IMR-90 (cell line): ENCODE measurements at regions of chr9 and their contacts with region 1.

Region 1: GRCh38 chr9:91101611-91102168 is 260.0 kb downstream of the AUH start:
- DNase-seq: no peak
- ATAC-seq: no peak
- H3K4me3 ChIP-seq: no peak overlapping the region
- H3K27ac ChIP-seq: peak overlapping the region; percentile 65
- H3K4me1 ChIP-seq: peaks cover 26% of the 10 kb centered on the region
- H3K27me3 ChIP-seq: no peaks in the 10 kb centered on the region
- CTCF ChIP-seq: no peak
- POLR2A ChIP-seq: no peak
- RAD21 ChIP-seq: no peak

Region 2: GRCh38 chr9:91077627-91078441 is 23.9 kb before region 1 on chr9:
- CTCF ChIA-PET with region 1: no interaction called
- POLR2A ChIA-PET with region 1: no interaction called
- dilution Hi-C with region 1: no loop called
- in situ Hi-C with region 1: no loop called
- intact Hi-C with region 1: loop called (anchors 2 kb)
- DNase-seq: no peak
- ATAC-seq: no peak; the same call in 1 of the 2 replicates
- H3K4me3 ChIP-seq: no peak overlapping the region
- H3K27ac ChIP-seq: no peak overlapping the region
- H3K4me1 ChIP-seq: peaks cover 9% of the 10 kb centered on the region
- H3K27me3 ChIP-seq: no peaks in the 10 kb centered on the region
- CTCF ChIP-seq: no peak
- POLR2A ChIP-seq: no peak
- RAD21 ChIP-seq: no peak

Region 3: GRCh38 chr9:91089405-91090129 is 12.1 kb before region 1 on chr9:
- CTCF ChIA-PET with region 1: no interaction called
- POLR2A ChIA-PET with region 1: no interaction called
- dilution Hi-C with region 1: no loop called
- in situ Hi-C with region 1: no loop called
- intact Hi-C with region 1: no loop called
- DNase-seq: peak; percentile 73
- ATAC-seq: peak; percentile 86
- H3K4me3 ChIP-seq: no peak overlapping the region
- H3K27ac ChIP-seq: peak overlapping the region; percentile 21
- H3K4me1 ChIP-seq: peaks cover 11% of the 10 kb centered on the region
- H3K27me3 ChIP-seq: no peaks in the 10 kb centered on the region
- CTCF ChIP-seq: peak; percentile 60
- POLR2A ChIP-seq: peak; percentile 41; the same call in 1 of the 2 replicates
- RAD21 ChIP-seq: peak; percentile 79

Region 4: DNA sequence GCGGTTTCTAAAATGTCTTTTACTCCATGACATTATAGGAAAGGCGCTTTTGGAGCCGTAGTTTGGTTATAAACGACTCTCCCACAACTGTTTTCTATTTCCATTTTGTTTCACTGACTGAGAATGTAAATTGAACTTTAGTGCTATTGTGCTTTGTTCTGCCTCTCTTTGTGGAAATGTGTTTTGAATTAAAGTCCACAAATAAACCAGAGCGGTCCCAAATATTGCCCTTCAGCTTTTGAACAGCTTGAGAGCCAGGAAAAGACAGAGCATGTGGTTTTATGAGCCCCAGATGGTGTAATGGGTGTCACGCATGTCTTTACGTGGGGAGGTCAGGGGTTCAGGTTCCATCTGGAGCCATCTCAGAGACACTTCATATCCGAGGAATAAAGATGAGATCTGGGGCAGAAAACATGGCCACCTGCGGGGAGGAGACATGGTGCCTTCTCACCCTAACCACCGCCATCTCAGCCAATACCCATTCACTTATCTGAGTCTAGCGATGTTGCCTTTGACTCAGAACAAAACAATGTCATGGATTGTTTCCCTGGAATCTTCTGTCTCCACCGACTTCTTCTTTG is 890.9 kb after region 1 on chr9:
- CTCF ChIA-PET with region 1: no interaction called
- POLR2A ChIA-PET with region 1: no interaction called
- dilution Hi-C with region 1: no loop called
- in situ Hi-C with region 1: no loop called
- intact Hi-C with region 1: no loop called
- DNase-seq: peak; percentile 48
- ATAC-seq: peak; percentile 27
- H3K4me3 ChIP-seq: no peak overlapping the region
- H3K27ac ChIP-seq: peak overlapping the region; percentile 13; the same call in 1 of the 2 replicates
- H3K4me1 ChIP-seq: peaks cover 2% of the 10 kb centered on the region; the same call in 1 of the 2 replicates
- H3K27me3 ChIP-seq: peaks cover 16% of the 10 kb centered on the region
- CTCF ChIP-seq: no peak
- POLR2A ChIP-seq: no peak
- RAD21 ChIP-seq: no peak